ENCODE measurements at regions of chr5 and their contacts with region 1.

Region 1: DNA sequence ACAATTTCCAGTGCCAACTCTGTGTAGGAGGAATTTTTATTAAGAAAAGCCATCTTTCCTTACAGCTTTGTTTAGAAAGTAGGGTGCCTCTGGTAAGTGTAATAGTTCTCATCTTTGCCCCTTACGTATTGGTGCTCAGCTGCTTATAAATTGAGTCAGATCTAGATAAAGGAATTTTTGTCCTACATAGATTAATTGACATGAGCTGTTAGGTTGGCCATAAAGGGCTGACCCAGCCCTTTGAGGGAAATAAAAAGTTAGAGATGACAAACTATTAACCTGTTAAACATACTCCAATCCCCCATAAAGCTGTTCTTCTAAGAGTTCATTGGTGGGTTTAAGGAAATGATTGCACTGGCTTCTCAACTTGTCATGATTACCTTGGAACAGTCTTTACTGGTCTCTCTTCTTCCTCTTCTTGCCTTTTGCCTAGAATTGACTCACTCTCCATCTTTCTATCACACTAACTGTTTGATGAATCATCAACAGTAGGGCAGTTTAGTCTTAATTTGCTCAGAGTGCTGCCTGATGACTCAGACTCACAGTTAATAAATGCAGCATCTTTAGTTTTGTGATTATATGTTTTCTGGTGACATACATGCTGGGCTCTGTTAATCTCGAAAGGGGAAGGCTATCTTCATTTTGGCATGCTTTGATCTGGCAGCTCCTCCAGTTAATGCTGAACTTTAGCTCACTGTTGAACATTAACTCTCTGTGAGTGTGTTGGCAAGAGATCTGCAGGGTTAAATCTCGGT is 51.7 kb downstream of the ARHGAP26 start:
- DNase-seq: peak; percentile 29
- ATAC-seq: peak; percentile 93
- H3K4me3 Mint-ChIP-seq: no peak overlapping the region
- H3K27ac Mint-ChIP-seq: peak overlapping the region; percentile 53
- H3K4me1 Mint-ChIP-seq: peaks cover 74% of the 10 kb centered on the region
- H3K27me3 Mint-ChIP-seq: no peaks in the 10 kb centered on the region

Region 2: GRCh38 chr5:141605523-141606277 is 1216.2 kb before region 1 on chr5:
- CTCF ChIA-PET with region 1: no interaction called
- POLR2A ChIA-PET with region 1: no interaction called
- intact Hi-C with region 1: loop called in 1 of 2 experiments (anchors 10 kb)
- DNase-seq: peak; percentile 79
- ATAC-seq: peak; percentile 90
- H3K4me3 Mint-ChIP-seq: peak overlapping the region; percentile 55
- H3K27ac Mint-ChIP-seq: peak overlapping the region; percentile 91
- H3K4me1 Mint-ChIP-seq: peaks cover 86% of the 10 kb centered on the region
- H3K27me3 Mint-ChIP-seq: no peaks in the 10 kb centered on the region

Region 3: DNA sequence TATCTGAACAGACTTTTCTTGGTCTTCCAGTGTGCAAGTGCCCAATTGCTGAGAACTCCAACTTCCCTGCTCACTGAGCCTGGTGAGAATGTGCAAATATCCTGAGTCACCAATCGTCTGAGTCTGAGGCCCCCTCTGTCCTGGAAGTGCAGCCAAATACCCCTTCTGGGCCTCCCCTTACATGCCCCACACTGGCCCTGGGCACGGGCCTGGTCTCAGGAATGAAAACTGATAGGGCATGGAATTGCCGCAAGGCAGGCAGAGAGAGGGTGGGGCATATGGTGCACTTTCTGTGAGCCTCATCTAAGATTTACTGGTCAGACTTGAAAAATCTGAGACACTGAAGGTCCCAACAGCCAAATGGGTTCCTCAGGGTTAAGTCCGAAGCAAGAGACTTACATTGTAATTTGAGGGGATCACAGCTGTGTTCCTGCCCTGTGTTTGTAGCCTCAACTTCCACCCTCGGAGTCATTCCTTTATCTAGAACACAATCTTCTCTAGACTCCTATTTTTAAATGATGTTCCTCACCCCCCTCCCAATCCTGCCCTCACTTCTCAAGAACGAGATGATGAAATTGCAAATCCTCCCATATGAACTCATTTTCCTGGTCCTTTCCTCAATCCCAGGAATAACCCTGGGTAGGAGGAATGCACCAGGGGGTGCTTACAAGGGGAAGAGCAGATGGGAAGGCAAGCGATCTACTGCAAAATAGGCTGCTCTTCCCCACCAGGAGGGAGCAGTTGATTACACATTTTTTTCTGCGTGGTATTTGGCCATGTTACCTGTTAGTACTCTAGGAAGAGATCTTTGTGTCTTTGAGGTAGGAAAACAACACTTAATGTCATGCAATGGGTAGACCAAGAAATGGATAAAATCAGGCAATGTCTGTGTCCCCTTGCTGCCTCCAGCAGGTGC is 86.3 kb before region 1 on chr5:
- CTCF ChIA-PET with region 1: no interaction called
- POLR2A ChIA-PET with region 1: no interaction called
- intact Hi-C with region 1: no loop called
- DNase-seq: no peak
- ATAC-seq: no peak
- H3K4me3 Mint-ChIP-seq: no peak overlapping the region
- H3K27ac Mint-ChIP-seq: no peak overlapping the region
- H3K4me1 Mint-ChIP-seq: peaks cover 8% of the 10 kb centered on the region
- H3K27me3 Mint-ChIP-seq: no peaks in the 10 kb centered on the region

Region 4: GRCh38 chr5:142783601-142784341 is 38.1 kb before region 1 on chr5:
- CTCF ChIA-PET with region 1: interaction called, 8 read pairs
- POLR2A ChIA-PET with region 1: interaction called, 5 read pairs
- intact Hi-C with region 1: loop called (anchors 1 kb)
- DNase-seq: peak; percentile 88
- ATAC-seq: peak; percentile 93
- H3K4me3 Mint-ChIP-seq: peak overlapping the region; percentile 45
- H3K27ac Mint-ChIP-seq: peak overlapping the region; percentile 82
- H3K4me1 Mint-ChIP-seq: peaks cover 69% of the 10 kb centered on the region
- H3K27me3 Mint-ChIP-seq: no peaks in the 10 kb centered on the region

Region 5: GRCh38 chr5:142800776-142801494 is 21.0 kb before region 1 on chr5:
- CTCF ChIA-PET with region 1: interaction called, 15 read pairs
- POLR2A ChIA-PET with region 1: interaction called, 8 read pairs
- intact Hi-C with region 1: loop called (anchors 1 kb)
- DNase-seq: peak; percentile 72
- ATAC-seq: peak; percentile 84
- H3K4me3 Mint-ChIP-seq: peak overlapping the region; percentile 69
- H3K27ac Mint-ChIP-seq: peak overlapping the region; percentile 97
- H3K4me1 Mint-ChIP-seq: peaks cover 66% of the 10 kb centered on the region
- H3K27me3 Mint-ChIP-seq: no peaks in the 10 kb centered on the region

Region 6: DNA sequence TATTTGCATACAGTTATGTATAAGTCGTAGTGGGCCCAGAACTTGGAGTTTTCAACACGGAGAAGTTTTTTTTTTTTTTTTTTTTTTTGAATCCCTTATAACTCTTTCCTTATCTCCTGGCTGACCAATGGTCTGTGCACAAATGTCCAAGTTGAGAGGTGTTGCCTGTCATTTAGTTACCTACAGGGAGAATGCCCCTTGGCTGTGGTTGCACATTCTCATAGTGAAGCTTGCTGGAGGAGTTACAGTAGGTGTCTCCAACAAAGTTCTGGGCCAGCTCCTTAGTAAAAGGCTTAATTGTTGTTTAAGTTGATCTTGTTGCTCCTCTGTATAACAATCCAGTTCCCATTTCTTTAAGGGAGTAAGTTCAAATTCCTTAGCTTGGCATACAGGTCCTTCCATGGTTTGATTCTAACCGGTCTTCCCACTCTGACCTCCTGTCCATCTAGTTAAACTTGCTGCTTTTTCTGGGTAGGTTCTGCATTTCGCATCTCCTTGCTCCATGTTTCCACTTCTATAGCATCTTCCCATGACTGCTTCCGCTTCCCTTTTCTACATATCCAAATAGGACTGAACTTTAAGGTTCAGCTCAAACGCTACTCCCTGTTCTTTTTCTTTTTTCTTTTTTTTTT is 43.6 kb after region 1 on chr5:
- CTCF ChIA-PET with region 1: interaction called, 4 read pairs
- POLR2A ChIA-PET with region 1: no interaction called
- intact Hi-C with region 1: loop called in 1 of 2 experiments (anchors 2 kb)
- DNase-seq: no peak
- ATAC-seq: no peak
- H3K4me3 Mint-ChIP-seq: no peak overlapping the region
- H3K27ac Mint-ChIP-seq: no peak overlapping the region
- H3K4me1 Mint-ChIP-seq: peaks cover 33% of the 10 kb centered on the region
- H3K27me3 Mint-ChIP-seq: no peaks in the 10 kb centered on the region

Measured in activated CD4-positive, alpha-beta T cell treated with anti-CD3 and anti-CD28 coated beads for 36 hours (primary cell).